ENCODE measurements at regions of chr16 and their contacts with region 1.

Region 1: GRCh38 chr16:21158208-21159110 is at the start of gene LDAF1:
- DNase-seq: peak; percentile 93
- ATAC-seq: peak; percentile 94
- total RNA-seq, gene LDAF1: 129 TPM

Region 2: GRCh38 chr16:20747030-20747816 is 411.2 kb before region 1 on chr16:
- intact Hi-C with region 1: no loop called
- DNase-seq: no peak
- ATAC-seq: no peak

Region 3: DNA sequence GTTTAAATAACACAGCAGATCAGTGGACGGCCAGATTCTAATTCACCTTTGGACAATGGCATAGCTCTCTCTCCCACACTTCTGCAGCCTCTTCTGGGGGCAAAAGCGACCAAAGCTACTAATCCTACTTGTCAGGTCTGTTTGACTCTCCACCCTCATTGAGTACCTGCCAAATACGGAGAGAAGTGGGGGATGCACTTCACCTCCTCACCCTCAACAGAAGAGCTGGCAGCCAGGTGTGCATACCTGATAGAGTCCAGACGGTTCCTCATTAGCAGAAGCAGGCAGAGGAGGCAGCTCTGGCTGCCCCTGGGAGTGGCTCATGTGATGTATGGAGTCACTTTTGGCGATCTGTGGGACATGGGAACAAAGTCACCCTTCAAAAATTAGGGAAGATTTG is 12.7 kb before region 1 on chr16:
- intact Hi-C with region 1: no loop called
- DNase-seq: no peak
- ATAC-seq: no peak

Region 4: DNA sequence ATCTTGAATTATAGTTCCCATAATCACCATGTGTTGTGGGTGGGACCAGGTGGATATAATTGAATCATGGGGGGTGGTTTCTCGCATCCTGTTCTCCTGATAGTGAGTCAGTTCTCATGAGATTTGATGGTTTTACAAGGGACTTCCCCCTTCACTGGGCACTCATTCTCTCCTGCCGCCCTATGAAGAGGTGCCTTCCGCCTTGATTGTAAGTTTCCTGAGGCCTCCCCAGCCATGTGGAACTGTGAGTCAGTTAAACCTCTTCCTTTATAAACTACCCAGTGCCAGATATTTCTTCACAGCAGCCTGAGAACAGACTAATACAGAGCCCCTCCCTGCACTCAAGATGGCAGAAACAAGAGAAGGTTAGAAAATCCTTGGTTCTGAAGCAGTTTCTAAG is 26.4 kb after region 1 on chr16:
- intact Hi-C with region 1: loop called (anchors 2 kb)
- DNase-seq: no peak
- ATAC-seq: no peak

Region 5: DNA sequence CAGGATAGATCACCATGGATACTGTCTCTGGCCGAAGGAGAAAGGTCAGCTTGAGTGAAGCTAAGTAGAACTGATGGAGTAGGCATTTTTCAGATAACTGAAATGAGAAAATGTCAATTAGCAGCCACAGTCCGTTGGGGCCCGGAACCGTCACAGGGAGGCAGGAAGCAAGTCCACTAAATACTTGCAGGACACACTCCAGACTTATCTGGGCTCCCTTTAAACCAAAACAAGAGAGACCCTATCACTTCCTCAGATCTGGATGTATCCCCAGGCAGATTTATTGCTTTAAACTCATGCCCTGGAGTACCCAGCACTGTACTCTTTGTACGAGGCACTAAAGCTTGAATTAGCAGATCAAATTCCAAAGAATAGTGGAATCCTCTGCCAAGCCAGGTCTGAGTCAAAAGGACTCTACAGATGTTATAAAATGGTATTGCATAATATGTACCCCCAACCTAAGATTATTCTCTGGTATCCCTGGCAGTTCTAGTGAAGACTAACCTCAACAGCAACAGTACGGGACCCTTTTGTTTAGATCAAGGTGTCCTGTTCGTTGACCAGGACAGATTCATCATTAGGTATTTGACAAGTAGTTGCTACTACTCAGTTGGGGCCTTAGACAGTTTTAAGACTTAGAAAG is 44.8 kb after region 1 on chr16:
- intact Hi-C with region 1: no loop called
- DNase-seq: no peak
- ATAC-seq: no peak

Region 6: GRCh38 chr16:21244518-21245215 is 86.2 kb after region 1 on chr16:
- intact Hi-C with region 1: no loop called
- DNase-seq: no peak
- ATAC-seq: no peak

Region 7: DNA sequence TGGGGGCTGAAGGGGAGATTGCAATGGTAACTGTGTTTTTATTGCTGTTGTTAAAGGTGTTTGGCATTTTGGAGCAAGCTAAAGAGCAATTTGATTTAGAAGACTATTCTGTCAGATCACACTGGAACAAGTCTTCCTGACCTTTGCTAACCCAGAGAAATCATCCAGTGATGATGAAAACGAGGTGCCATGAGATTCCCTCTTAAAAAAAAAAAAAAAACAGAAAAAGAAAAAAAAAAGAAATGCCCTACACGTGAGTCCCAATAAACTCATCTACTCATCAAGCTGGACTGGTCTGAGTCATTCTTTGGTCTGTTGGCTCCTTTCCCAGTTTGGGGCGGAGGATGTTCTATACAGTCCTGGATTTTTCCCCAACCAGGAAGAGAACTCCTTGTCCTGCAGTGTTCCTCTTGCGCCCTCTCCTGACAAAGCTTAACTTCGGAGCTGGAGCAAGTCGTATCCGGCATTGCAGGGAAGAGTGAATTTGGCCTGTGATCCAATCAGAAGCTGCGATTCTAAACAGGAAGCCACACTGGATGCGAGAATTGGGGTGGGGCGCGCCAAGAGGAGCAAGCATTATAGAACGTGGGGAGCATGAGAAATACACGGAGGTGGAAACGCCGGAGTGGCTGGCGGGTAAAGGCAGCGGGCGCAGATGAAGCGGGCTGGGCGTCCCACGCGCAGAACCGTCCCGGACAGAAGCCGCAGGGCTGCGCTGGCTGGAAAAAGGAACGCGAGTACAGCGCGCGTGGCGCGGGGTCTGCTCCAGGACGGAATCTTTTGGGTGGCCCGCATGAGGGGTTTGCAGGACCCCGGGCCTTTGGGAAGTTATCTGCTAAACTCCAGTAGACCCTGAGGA is 142.1 kb after region 1 on chr16:
- intact Hi-C with region 1: loop called (anchors 1 kb)
- DNase-seq: peak; percentile 91
- ATAC-seq: peak; percentile 99

Region 8: GRCh38 chr16:22190776-22191531 is 1032.5 kb after region 1 on chr16:
- intact Hi-C with region 1: loop called (anchors 10 kb)
- DNase-seq: peak; percentile 100
- ATAC-seq: peak; percentile 81

Measured in Right ventricle myocardium inferior (tissue), 1 donor.